ENCODE measurements at regions of chr19 and their contacts with region 1.

Region 1: GRCh38 chr19:55146078-55146704 is 2.8 kb downstream of the TNNT1 start:
- DNase-seq: peak; percentile 29
- H3K4me3 ChIP-seq: peak overlapping the region; percentile 48 to 54 (median 51)
- H3K27ac ChIP-seq: no peak overlapping the region
- H3K4me1 ChIP-seq: peaks cover 5% of the 10 kb centered on the region
- H3K27me3 ChIP-seq: no peaks in the 10 kb centered on the region
- CTCF ChIP-seq: peak; percentile 54 to 84

Region 2: DNA sequence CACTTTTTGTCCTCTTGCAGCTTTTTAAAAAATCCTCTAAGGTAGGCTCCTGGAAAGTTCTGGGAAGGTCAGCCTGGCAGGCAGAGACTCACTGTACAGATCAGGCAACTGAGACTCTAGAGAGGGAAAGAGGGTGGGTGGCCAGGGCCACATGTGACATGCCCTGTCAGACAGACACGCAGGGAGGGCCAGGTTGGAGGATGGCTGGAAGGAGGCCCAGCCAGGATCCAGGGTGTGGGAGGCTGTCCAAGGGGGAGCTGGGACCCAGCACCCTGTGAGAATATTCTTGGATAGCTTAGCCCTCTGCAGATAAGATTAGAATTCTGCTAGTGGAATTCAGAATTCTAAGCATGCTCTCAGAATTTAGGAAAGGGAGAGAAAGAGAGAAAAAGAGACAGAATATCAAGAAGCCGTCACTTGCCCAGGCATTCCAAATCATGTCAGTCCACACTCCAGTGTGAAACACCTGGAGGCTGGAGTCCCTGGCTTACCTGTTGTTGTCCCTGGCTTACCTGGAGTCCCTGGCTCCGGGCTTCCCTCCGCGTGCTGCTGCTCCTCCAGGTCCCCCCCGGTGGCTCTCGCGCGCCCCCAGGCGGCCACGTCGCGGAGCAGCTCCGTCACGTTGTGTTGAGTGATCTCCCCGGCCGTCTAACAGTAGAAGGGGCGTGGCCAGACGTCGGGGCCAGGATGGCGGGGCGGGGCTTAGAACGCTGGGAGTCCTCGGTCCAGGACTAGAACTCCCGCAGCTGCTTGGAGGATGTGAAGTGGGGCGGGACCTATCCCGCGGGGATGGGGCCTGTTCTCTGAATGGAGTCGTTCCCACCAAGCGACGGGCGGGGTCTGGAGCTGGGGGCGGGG is 14.2 kb after region 1 on chr19:
- CTCF ChIA-PET with region 1: interaction called, 4 read pairs
- dilution Hi-C with region 1: no loop called
- in situ Hi-C with region 1: no loop called
- intact Hi-C with region 1: loop called (anchors 1 kb)
- DNase-seq: peak; percentile 83
- H3K4me3 ChIP-seq: no peak overlapping the region
- H3K27ac ChIP-seq: no peak overlapping the region
- H3K4me1 ChIP-seq: peaks cover 18% of the 10 kb centered on the region
- H3K27me3 ChIP-seq: peaks cover 2% of the 10 kb centered on the region
- CTCF ChIP-seq: peak; percentile 86 to 97

Region 3: DNA sequence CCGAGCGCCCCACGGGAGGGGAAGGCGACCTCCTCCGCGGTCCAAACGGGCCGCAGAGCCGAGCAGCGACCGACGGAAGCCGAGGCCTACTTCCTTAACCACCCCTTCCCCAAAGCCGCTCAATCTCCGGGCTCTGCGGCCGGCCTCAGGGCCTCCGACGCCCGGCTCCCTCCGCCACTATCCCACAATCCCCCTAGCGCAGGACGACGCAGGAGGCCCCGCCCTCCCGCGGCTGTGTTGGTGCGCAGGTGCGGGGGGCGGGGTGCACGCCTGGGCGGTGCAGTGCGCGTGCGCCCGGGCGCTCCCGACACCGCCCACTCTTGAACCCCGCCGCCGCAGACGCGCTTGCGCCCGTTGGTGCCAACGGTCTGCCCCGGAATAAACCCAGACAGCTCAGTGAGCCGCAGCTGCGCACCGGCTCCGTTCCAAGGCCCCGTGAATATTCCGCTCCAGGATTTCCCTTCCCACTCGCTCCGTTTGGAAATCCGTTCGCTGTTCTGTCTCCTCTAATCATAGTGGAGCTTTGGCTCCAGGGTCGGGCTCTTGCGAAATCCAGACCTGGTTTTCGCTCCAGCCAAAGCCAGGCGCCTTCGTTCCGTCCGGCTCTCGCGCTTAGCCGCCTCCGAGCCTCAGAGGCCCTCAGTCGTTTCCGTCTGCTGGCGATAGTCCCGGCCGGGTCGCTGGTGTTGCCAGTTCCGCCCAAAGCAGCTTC is 112.8 kb after region 1 on chr19 and contains the start of gene PPP6R1:
- CTCF ChIA-PET with region 1: interaction called, 12 read pairs
- dilution Hi-C with region 1: no loop called
- in situ Hi-C with region 1: no loop called
- intact Hi-C with region 1: loop called (anchors 5 kb)
- DNase-seq: peak; percentile 100
- H3K4me3 ChIP-seq: peak within 1 kb of the TSS; percentile 82 to 95 (median 94)
- H3K27ac ChIP-seq: peak within 1 kb of the TSS; percentile 89
- H3K4me1 ChIP-seq: peaks cover 28% of the 10 kb centered on the region
- H3K27me3 ChIP-seq: no peaks in the 10 kb centered on the region
- CTCF ChIP-seq: peak in 1 of 2 donors; percentile 1
- total RNA-seq, gene PPP6R1: 28.3 to 74.2 TPM

Region 4: GRCh38 chr19:55407800-55408532 is 261.8 kb after region 1 on chr19:
- CTCF ChIA-PET with region 1: no interaction called
- dilution Hi-C with region 1: no loop called
- in situ Hi-C with region 1: loop called (anchors 25 kb)
- intact Hi-C with region 1: no loop called
- DNase-seq: peak; percentile 98
- H3K4me3 ChIP-seq: peak overlapping the region; percentile 75 to 94 (median 81)
- H3K27ac ChIP-seq: peak overlapping the region; percentile 94
- H3K4me1 ChIP-seq: peaks cover 29% of the 10 kb centered on the region
- H3K27me3 ChIP-seq: no peaks in the 10 kb centered on the region
- CTCF ChIP-seq: no peak

Region 5: DNA sequence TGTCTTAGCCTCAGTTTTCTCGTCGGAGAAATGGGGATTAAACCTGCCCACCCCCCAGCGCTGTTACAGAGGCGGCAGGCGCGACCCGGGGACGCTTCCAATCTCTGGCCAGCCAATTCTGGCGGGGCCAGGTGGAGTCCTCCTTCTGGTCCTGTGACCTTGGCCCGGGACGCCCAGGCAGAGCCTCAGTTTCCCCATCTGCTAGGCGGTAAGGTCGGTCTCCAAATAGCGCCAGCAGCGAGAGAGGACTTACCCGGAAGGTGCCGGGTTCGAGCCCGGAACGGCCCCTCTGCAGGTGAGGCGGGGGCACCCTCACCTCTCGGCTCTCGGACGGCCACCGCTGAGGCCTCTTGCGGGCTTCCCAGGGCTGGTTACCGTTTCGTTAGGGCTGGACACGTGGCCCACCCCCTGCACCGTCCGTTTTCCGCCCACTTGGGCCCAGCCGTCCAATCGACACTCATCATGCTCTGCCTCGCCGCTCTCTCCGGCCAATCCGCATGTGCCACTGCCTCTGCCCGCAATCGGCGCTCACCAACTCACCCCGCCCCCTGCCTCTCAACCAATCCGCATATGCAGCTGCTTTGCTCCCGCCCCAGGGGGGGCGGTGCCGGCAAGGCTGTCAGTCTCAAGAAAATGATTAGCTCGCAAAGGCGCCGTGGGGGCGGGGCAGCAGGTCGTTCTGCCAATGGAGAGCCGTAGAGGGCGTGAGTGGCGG is 315.2 kb after region 1 on chr19 and contains the start of gene ISOC2:
- CTCF ChIA-PET with region 1: interaction called, 14 read pairs
- dilution Hi-C with region 1: no loop called
- in situ Hi-C with region 1: no loop called
- intact Hi-C with region 1: no loop called
- DNase-seq: peak; percentile 100
- H3K4me3 ChIP-seq: peak within 1 kb of the TSS; percentile 73 to 91 (median 84)
- H3K27ac ChIP-seq: peak within 1 kb of the TSS; percentile 54
- H3K4me1 ChIP-seq: peaks cover 15% of the 10 kb centered on the region
- H3K27me3 ChIP-seq: no peaks in the 10 kb centered on the region
- CTCF ChIP-seq: no peak
- total RNA-seq, gene ISOC2: 38.9 to 65.0 TPM

Region 6: GRCh38 chr19:55632463-55632834 is 486.3 kb after region 1 on chr19:
- CTCF ChIA-PET with region 1: interaction called, 5 read pairs
- dilution Hi-C with region 1: no loop called
- in situ Hi-C with region 1: loop called in 1 of 2 experiments (anchors 25 kb)
- intact Hi-C with region 1: loop called (anchors 5 kb)
- DNase-seq: peak; percentile 84
- H3K4me3 ChIP-seq: no peak overlapping the region
- H3K27ac ChIP-seq: no peak overlapping the region
- H3K4me1 ChIP-seq: peaks cover 14% of the 10 kb centered on the region
- H3K27me3 ChIP-seq: no peaks in the 10 kb centered on the region
- CTCF ChIP-seq: peak; percentile 77 to 79